ENCODE measurements at regions of chr22 and their contacts with region 1.

Region 1: GRCh38 chr22:18077639-18078328 is at the start of gene PEX26:
- DNase-seq: peak; percentile 97
- H3K4me3 Mint-ChIP-seq: peak within 1 kb of the TSS; percentile 89
- H3K27ac Mint-ChIP-seq: peak within 1 kb of the TSS; percentile 95
- H3K4me1 Mint-ChIP-seq: peaks cover 43% of the 10 kb centered on the region
- H3K27me3 Mint-ChIP-seq: no peaks in the 10 kb centered on the region
- total RNA-seq, gene PEX26: 40.1 to 41.0 TPM

Region 2: GRCh38 chr22:17830043-17830961 is 247.5 kb before region 1 on chr22:
- CTCF ChIA-PET with region 1: interaction called, 24 read pairs
- POLR2A ChIA-PET with region 1: interaction called, 3 read pairs
- DNase-seq: peak; percentile 85
- H3K4me3 Mint-ChIP-seq: no peak overlapping the region
- H3K27ac Mint-ChIP-seq: no peak overlapping the region
- H3K4me1 Mint-ChIP-seq: peaks cover 9% of the 10 kb centered on the region
- H3K27me3 Mint-ChIP-seq: no peaks in the 10 kb centered on the region

Region 3: GRCh38 chr22:18113680-18114394 is 36.1 kb after region 1 on chr22:
- CTCF ChIA-PET with region 1: no interaction called
- POLR2A ChIA-PET with region 1: no interaction called
- DNase-seq: no peak
- H3K4me3 Mint-ChIP-seq: no peak overlapping the region
- H3K27ac Mint-ChIP-seq: no peak overlapping the region
- H3K4me1 Mint-ChIP-seq: peaks cover 24% of the 10 kb centered on the region
- H3K27me3 Mint-ChIP-seq: peaks cover 37% of the 10 kb centered on the region